ENCODE measurements at regions of chr2 and their contacts with region 1.

Region 1: DNA sequence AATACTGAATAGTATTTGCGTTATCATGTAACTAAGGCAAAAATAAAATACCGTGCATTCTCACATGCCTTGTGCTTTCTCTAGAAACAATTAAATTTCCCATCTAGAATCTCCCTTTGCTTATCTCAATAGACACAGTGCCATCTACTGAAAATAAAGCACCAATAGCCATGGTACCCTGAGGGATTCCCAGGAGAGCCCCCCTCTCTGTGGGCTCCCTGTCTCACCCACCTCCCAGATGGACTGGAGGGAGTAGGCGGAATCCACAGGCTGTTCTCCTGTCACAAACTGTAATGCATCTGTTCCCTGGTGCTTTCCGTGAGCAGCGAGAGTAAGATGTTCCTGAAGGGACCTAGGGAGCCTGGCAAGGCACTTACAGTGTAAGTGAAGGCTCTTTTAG is 112.4 kb upstream of the UPP2 start:
- DNase-seq: no peak
- ATAC-seq: peak; percentile 71
- H3K4me3 ChIP-seq: no peak overlapping the region
- H3K27ac ChIP-seq: no peak overlapping the region
- H3K4me1 ChIP-seq: no peaks in the 10 kb centered on the region
- H3K27me3 ChIP-seq: no peaks in the 10 kb centered on the region
- CTCF ChIP-seq: peak in 2 of 3 experiments; percentile 28 to 48; a peak in 2 of 6 replicates
- EP300 ChIP-seq: no peak
- POLR2A ChIP-seq: no peak
- RAD21 ChIP-seq: peak; percentile 66 to 74

Region 2: GRCh38 chr2:156908825-156909224 is 1080.4 kb before region 1 on chr2:
- CTCF ChIA-PET with region 1: no interaction called
- POLR2A ChIA-PET with region 1: no interaction called
- in situ Hi-C with region 1: no loop called
- intact Hi-C with region 1: no loop called
- DNase-seq: no peak
- ATAC-seq: no peak
- H3K4me3 ChIP-seq: no peak overlapping the region
- H3K27ac ChIP-seq: no peak overlapping the region
- H3K4me1 ChIP-seq: no peaks in the 10 kb centered on the region
- H3K27me3 ChIP-seq: no peaks in the 10 kb centered on the region
- CTCF ChIP-seq: no peak
- EP300 ChIP-seq: no peak
- POLR2A ChIP-seq: no peak
- RAD21 ChIP-seq: no peak

Region 3: DNA sequence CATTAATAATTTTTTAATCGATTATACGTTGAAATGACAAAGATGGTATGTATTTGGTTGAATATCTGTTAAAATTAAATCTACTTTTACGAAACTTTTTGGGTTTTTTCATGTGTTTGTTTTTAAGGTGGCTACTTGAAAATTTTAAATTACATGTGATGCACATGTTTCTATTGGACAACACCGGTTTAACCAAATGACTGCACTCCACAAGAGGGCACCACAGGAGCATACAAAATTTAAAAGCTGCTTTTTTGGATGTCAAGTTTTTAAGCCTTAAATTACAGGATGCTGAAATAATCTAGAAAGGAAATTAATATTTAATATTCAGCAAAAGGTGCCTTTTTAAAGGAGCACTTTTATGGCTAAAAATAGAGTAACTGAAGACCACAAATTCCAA is 211.8 kb before region 1 on chr2:
- CTCF ChIA-PET with region 1: interaction called, 8 read pairs
- POLR2A ChIA-PET with region 1: interaction called, 3 read pairs
- in situ Hi-C with region 1: no loop called
- intact Hi-C with region 1: loop called (anchors 1 kb)
- DNase-seq: peak; percentile 60 to 70 (median 66)
- ATAC-seq: peak; percentile 67; the same call in 2 of the 3 replicates
- H3K4me3 ChIP-seq: no peak overlapping the region
- H3K27ac ChIP-seq: no peak overlapping the region
- H3K4me1 ChIP-seq: peaks cover 0 to 9% of the 10 kb centered on the region in 2 experiments; a peak in 4 of 5 replicates
- H3K27me3 ChIP-seq: no peaks in the 10 kb centered on the region
- CTCF ChIP-seq: peak; percentile 54 to 86 (median 58); a peak in 4 of 6 replicates
- EP300 ChIP-seq: no peak
- POLR2A ChIP-seq: no peak
- RAD21 ChIP-seq: peak; percentile 93 to 94

Region 4: DNA sequence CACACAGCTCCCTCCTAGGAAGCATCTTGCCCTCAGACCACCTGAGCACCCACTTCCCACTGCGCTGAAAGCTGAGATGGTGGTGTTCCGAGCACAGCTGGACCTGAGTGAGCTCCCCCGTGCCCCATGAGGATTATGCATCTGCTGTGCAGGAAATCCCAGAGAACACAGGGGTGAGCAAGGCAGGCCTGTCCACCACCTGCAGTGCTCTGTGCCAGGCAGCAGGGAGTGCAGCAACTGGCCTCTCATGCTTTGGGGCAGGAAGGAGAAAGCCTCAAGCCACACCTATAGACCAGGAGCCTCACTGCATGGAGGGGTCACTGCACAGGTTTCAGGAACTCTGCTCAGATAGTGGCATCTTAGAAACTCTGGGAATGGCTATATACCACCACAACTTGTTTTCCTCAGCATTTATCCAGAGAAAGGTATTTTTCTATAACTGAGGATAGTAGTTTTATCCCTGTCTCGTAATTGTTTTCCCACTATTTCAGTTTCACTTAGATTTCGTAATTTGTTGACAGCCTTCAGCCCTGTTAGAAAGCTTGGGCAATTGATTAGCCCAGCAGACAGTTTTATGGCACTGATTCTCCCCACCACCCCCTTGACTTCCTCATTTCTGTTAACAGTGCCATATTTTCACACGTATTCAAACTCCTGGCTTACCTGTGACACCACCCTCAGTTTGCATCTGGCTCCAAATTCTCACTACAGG is 661.6 kb after region 1 on chr2:
- CTCF ChIA-PET with region 1: no interaction called
- POLR2A ChIA-PET with region 1: no interaction called
- in situ Hi-C with region 1: no loop called
- intact Hi-C with region 1: no loop called
- DNase-seq: no peak
- ATAC-seq: peak; percentile 55
- H3K4me3 ChIP-seq: no peak overlapping the region
- H3K27ac ChIP-seq: no peak overlapping the region
- H3K4me1 ChIP-seq: no peaks in the 10 kb centered on the region
- H3K27me3 ChIP-seq: no peaks in the 10 kb centered on the region
- CTCF ChIP-seq: no peak
- EP300 ChIP-seq: no peak
- POLR2A ChIP-seq: no peak
- RAD21 ChIP-seq: no peak

Measured in K562 (cell line).